Heart right ventricle (tissue), 16 donors: ENCODE measurements at regions of chr2 and their contacts with region 1.

Region 1: DNA sequence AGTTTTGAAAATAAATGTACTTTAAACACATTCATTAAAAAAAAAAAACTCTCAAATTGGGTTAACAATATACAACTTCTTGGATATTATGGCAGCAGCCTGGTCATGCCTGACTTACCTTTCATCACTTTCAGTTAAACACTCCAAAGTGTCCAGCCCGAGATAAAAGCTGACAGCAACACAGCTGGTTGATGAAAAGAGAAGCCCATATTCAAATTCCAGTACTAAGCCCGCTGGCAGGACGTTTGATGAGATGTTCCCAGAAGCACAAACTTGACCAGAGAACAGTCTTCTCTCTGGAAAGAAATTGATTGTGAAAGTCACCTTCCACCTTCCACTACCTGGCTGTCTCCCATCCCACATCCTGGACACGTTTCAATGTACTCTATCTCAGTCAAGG is 586.3 kb downstream of the TDRD15 start:
- DNase-seq: peak; percentile 14 to 51
- ATAC-seq: peak; percentile 71 to 98 (median 96)
- H3K4me3 ChIP-seq: no peak overlapping the region
- H3K27ac ChIP-seq: peak overlapping the region in 7 of 10 donors; percentile 26 to 65 (median 43)
- H3K4me1 ChIP-seq: peaks cover 0 to 6% (median 0%) of the 10 kb centered on the region in 9 donors
- H3K27me3 ChIP-seq: no peaks in the 10 kb centered on the region
- CTCF ChIP-seq: no peak

Region 2: DNA sequence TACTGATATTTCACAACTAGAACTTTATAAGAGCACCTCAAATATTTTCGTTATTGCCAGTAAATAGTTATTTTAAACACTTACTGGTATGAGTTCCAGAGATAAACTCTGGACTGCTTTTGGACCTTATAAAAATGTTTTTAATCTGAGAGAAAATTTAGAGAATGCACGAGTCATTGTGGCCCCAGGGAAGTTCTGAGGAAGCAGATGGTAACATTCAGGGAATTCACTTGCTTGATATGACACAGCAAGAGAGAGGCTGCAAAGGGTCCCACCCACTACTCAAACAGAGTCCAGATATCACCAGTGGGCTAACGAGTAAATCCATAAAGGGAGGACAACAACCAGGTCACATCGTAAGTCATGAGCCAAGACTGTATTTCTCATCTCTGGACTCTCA is 59.5 kb before region 1 on chr2:
- intact Hi-C with region 1: no loop called
- DNase-seq: no peak
- ATAC-seq: no peak
- H3K4me3 ChIP-seq: no peak overlapping the region
- H3K27ac ChIP-seq: no peak overlapping the region
- H3K4me1 ChIP-seq: no peaks in the 10 kb centered on the region
- H3K27me3 ChIP-seq: no peaks in the 10 kb centered on the region
- CTCF ChIP-seq: no peak

Region 3: GRCh38 chr2:21757805-21758430 is 47.9 kb after region 1 on chr2:
- intact Hi-C with region 1: loop called in 2 of 10 experiments (anchors 1 to 5 kb)
- DNase-seq: peak; percentile 11 to 47
- ATAC-seq: peak; percentile 59 to 98 (median 90)
- H3K4me3 ChIP-seq: no peak overlapping the region
- H3K27ac ChIP-seq: peak overlapping the region in 7 of 10 donors; percentile 17 to 69 (median 55)
- H3K4me1 ChIP-seq: peaks cover 0 to 10% (median 0%) of the 10 kb centered on the region in 9 donors
- H3K27me3 ChIP-seq: no peaks in the 10 kb centered on the region
- CTCF ChIP-seq: no peak